Panc1 (cell line): ENCODE measurements at regions of chr11 and their contacts with region 1.

Region 1: DNA sequence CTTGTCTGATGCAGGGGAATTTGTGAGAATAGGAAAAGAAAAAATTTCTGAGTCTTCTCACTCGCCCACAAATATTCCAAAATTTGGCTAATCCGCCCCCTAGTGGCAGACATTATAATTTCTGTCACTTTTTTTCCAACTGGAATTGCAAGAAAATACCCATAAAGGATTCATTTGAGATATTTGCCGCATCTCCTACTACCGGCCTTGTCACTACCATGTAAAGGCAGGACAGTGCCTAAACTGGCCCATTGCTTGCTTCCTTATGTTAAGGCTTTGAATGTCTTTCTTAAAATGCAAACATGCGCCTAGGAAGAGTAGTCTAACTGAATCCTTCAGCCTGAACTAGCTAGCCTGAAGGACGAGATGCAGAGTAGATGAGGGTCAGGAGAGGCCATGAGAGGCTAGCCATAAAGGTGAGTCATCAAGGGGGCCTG is 9.3 kb upstream of the CEP295 start:
- DNase-seq: no peak
- ATAC-seq: peak; percentile 67
- H3K4me3 ChIP-seq: 0 out of 4 replicates have a peak overlapping the region, but pooled peaks of 1 of the 2 experiments have one; percentile 6
- H3K27ac ChIP-seq: no peak overlapping the region
- H3K4me1 ChIP-seq: peaks cover 6% of the 10 kb centered on the region; the same call in 1 of the 2 replicates
- H3K27me3 ChIP-seq: peaks cover 33% of the 10 kb centered on the region
- CTCF ChIP-seq: peak; percentile 90

Region 2: GRCh38 chr11:93468290-93468689 is 183.9 kb before region 1 on chr11:
- CTCF ChIA-PET with region 1: no interaction called
- POLR2A ChIA-PET with region 1: no interaction called
- in situ Hi-C with region 1: no loop called
- intact Hi-C with region 1: loop called (anchors 5 kb)
- DNase-seq: no peak
- ATAC-seq: no peak
- H3K4me3 ChIP-seq: no peak overlapping the region
- H3K27ac ChIP-seq: no peak overlapping the region
- H3K4me1 ChIP-seq: no peaks in the 10 kb centered on the region
- H3K27me3 ChIP-seq: peaks cover 2% of the 10 kb centered on the region; the same call in 1 of the 2 replicates
- CTCF ChIP-seq: no peak

Region 3: GRCh38 chr11:93543292-93543977 is 108.7 kb before region 1 on chr11 and contains the start of gene SMCO4:
- CTCF ChIA-PET with region 1: no interaction called
- POLR2A ChIA-PET with region 1: no interaction called
- in situ Hi-C with region 1: no loop called
- intact Hi-C with region 1: loop called (anchors 5 kb)
- DNase-seq: peak; percentile 35
- ATAC-seq: peak; percentile 97
- H3K4me3 ChIP-seq: peak within 1 kb of the TSS; percentile 65 to 91
- H3K27ac ChIP-seq: peak within 1 kb of the TSS; percentile 70
- H3K4me1 ChIP-seq: peaks cover 14% of the 10 kb centered on the region
- H3K27me3 ChIP-seq: peaks cover 16% of the 10 kb centered on the region
- CTCF ChIP-seq: peak; percentile 93
- total RNA-seq, gene SMCO4: 14.1 TPM